Caco-2 (cell line): ENCODE measurements at regions of chrX and their contacts with region 1.

Region 1: GRCh38 chrX:72003811-72004750 is 93.4 kb downstream of the NHSL2 start:
- DNase-seq: peak; percentile 48 to 56
- H3K4me3 ChIP-seq: no peak overlapping the region
- H3K4me3 Mint-ChIP-seq: no peak overlapping the region
- H3K27ac Mint-ChIP-seq: no peak overlapping the region
- H3K4me1 ChIP-seq: no peaks in the 10 kb centered on the region
- H3K4me1 Mint-ChIP-seq: peaks cover 9% of the 10 kb centered on the region
- H3K27me3 ChIP-seq: no peaks in the 10 kb centered on the region
- H3K27me3 Mint-ChIP-seq: no peaks in the 10 kb centered on the region
- CTCF ChIP-seq: peak; percentile 18 to 39

Region 2: GRCh38 chrX:71541210-71542022 is 462.7 kb before region 1 on chrX:
- CTCF ChIA-PET with region 1: no interaction called
- POLR2A ChIA-PET with region 1: no interaction called
- intact Hi-C with region 1: no loop called
- DNase-seq: no peak
- H3K4me3 ChIP-seq: no peak overlapping the region
- H3K4me3 Mint-ChIP-seq: no peak overlapping the region
- H3K27ac Mint-ChIP-seq: no peak overlapping the region
- H3K4me1 ChIP-seq: no peaks in the 10 kb centered on the region; the same call in 1 of the 2 replicates
- H3K4me1 Mint-ChIP-seq: peaks cover 17% of the 10 kb centered on the region
- H3K27me3 ChIP-seq: no peaks in the 10 kb centered on the region
- H3K27me3 Mint-ChIP-seq: no peaks in the 10 kb centered on the region
- CTCF ChIP-seq: no peak

Region 3: GRCh38 chrX:71870208-71871098 is 133.6 kb before region 1 on chrX:
- CTCF ChIA-PET with region 1: no interaction called
- POLR2A ChIA-PET with region 1: no interaction called
- intact Hi-C with region 1: loop called (anchors 10 kb)
- DNase-seq: peak; percentile 44 to 48
- H3K4me3 ChIP-seq: no peak overlapping the region
- H3K4me3 Mint-ChIP-seq: no peak overlapping the region
- H3K27ac Mint-ChIP-seq: no peak overlapping the region
- H3K4me1 ChIP-seq: no peaks in the 10 kb centered on the region
- H3K4me1 Mint-ChIP-seq: no peaks in the 10 kb centered on the region
- H3K27me3 ChIP-seq: no peaks in the 10 kb centered on the region
- H3K27me3 Mint-ChIP-seq: peaks cover 4% of the 10 kb centered on the region
- CTCF ChIP-seq: peak; percentile 18 to 27